CD4-positive, alpha-beta T cell (primary cell): ENCODE measurements at regions of chr7 and their contacts with region 1.

Region 1: DNA sequence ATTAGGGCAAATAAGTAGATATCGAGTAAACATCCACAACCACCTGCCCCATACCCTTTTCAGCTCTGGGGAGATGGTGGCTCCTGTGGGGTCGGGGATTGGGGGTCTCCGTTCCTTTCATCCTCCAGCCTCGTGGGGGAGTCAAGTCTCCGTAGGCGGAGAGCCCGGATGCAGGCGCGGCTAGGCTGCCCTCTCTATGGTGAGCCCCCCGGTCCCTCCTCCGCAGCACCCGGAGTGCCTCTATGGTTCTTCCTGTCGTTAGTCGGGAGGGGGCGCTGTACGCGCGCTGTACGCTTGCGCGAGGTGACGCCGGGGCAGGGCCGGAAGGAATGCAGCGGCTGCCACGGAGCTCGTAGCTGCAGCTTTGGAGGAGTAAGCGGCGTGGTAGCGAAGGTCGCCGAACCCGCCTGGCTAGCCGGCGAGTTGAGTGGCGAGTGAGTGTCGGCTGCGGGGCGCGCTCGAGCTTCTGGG is 14.8 kb upstream of the MMD2 start:
- DNase-seq: peak; percentile 88 to 96 (median 93)
- ATAC-seq: peak; percentile 98
- H3K4me3 ChIP-seq: peak overlapping the region; percentile 65
- H3K4me3 Mint-ChIP-seq: peak overlapping the region; percentile 99
- H3K27ac ChIP-seq: peak overlapping the region; percentile 36 to 61
- H3K27ac Mint-ChIP-seq: peak overlapping the region; percentile 87
- H3K4me1 ChIP-seq: peaks cover 17% of the 10 kb centered on the region
- H3K4me1 Mint-ChIP-seq: peaks cover 31% of the 10 kb centered on the region
- H3K27me3 ChIP-seq: no peaks in the 10 kb centered on the region
- H3K27me3 Mint-ChIP-seq: no peaks in the 10 kb centered on the region
- CTCF ChIP-seq: peak; percentile 75

Region 2: DNA sequence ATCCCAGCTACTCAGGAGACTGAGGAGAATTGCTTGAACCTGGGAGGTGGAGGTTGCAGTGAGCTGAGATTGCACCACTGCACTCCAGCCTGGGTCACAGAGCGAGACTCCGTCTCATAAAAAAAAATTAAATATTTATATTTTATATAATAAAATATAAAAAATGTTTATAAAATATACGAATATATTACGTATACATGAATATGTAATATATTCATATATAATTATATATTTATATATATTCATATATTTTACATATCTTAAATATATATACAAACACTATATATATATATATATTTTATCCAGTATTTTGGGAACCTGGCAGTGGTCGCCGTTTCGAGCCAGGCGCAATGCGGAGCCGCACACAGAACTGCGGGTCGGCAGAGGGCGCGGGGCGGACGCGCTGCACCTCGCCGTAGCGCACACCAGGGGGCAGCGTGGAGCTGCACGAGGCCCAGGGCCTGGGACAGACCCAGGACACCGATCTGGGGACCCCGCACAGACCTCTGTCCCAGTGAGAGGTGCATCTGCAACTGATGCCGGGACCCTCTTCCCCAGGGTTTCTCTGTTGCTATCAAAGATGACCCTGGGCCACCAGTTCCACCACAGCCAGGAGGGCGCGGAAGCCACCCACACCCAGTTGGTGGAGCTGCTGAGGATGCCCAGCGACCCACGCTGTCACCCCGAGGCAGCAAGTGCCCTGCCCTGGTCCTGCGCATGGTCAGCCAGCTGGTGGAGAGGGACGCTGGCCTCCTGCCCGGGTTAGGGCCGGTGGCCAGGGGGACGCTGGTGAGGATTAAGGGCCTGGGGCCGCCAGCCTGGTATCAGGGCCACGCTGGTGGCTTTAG is 175.7 kb before region 1 on chr7:
- CTCF ChIA-PET with region 1: no interaction called
- POLR2A ChIA-PET with region 1: interaction called, 6 read pairs
- intact Hi-C with region 1: loop called in 1 of 2 experiments (anchors 2 kb)
- DNase-seq: peak in 13 of 14 experiments; percentile 45 to 83 (median 56)
- ATAC-seq: peak; percentile 96
- H3K4me3 ChIP-seq: no peak overlapping the region
- H3K4me3 Mint-ChIP-seq: no peak overlapping the region
- H3K27ac ChIP-seq: no peak overlapping the region
- H3K27ac Mint-ChIP-seq: no peak overlapping the region
- H3K4me1 ChIP-seq: peaks cover 4% of the 10 kb centered on the region
- H3K4me1 Mint-ChIP-seq: no peaks in the 10 kb centered on the region
- H3K27me3 ChIP-seq: no peaks in the 10 kb centered on the region
- H3K27me3 Mint-ChIP-seq: no peaks in the 10 kb centered on the region
- CTCF ChIP-seq: peak; percentile 94

Region 3: DNA sequence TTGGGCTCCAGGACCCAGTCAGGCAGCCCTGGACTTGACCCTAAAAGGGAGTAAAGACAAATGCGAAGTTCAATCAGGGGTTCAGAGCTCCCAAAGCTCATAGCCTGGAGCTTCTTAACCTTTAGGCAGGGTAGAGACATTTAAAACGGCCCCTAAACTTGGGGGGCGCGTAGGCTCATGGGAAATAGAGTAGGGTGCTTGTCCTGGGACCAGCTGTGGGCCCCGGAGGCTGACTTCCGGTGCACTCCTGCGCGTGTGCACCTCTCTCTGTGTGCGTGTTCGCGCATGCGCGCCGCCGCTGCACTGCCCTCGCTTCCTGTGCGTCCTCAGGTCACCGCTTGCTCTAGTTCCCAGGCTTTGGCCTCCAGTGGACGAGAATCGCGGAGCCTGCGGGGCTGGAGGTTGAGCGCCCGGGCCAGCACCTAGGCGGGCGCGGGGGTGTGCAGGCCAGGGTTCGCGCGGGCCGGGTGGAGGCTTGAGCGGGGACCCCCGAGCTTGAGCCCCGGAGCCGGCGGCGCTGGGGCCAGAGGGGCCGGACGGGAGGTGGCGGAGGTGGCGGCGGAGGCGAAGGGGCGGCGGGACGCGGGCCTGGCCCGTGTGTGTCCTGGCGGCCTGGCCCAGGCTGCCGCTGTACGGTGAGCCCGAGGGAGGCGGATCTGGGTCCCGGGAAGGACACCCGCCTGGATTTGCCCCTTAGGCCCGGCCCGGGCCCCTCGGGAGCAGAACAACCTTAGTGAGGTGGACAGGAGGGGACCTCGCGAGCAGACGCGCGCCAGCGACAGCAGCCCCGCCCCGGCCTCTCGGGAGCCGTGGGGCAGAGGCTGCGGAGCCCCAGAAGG is 72.0 kb after region 1 on chr7 and contains the start of gene RBAK:
- CTCF ChIA-PET with region 1: interaction called, 5 read pairs
- POLR2A ChIA-PET with region 1: interaction called, 12 read pairs
- intact Hi-C with region 1: loop called in 1 of 2 experiments (anchors 10 kb)
- DNase-seq: peak; percentile 74 to 96 (median 87)
- ATAC-seq: peak; percentile 99
- H3K4me3 ChIP-seq: peak within 1 kb of the TSS; percentile 80
- H3K4me3 Mint-ChIP-seq: peak within 1 kb of the TSS; percentile 95
- H3K27ac ChIP-seq: peak within 1 kb of the TSS; percentile 9 to 68
- H3K27ac Mint-ChIP-seq: peak within 1 kb of the TSS; percentile 82
- H3K4me1 ChIP-seq: peaks cover 26% of the 10 kb centered on the region
- H3K4me1 Mint-ChIP-seq: peaks cover 44% of the 10 kb centered on the region
- H3K27me3 ChIP-seq: no peaks in the 10 kb centered on the region
- H3K27me3 Mint-ChIP-seq: no peaks in the 10 kb centered on the region
- CTCF ChIP-seq: no peak
- total RNA-seq, gene RBAK: 11.0 to 12.4 TPM

Region 4: DNA sequence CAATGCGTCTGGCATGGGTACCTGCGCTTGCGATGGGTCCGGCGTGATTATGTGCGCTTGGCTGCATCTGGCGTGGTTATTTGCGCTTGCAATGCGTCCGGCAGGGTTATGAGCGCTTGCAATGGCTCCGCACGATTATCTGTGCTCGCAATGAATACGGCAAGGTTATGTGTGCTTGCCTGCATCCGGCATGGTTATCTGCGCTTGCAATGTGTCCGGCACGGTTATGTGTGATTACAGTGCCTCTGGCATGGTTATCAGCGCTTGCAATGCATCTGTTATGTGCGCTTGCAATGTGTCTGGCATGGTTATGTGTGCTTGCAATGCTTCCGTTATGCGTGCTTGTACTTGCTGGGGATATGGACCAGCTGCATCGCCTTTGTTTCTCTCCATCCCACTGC is 109.5 kb after region 1 on chr7:
- CTCF ChIA-PET with region 1: interaction called, 4 read pairs
- POLR2A ChIA-PET with region 1: interaction called, 7 read pairs
- intact Hi-C with region 1: loop called (anchors 1 kb)
- DNase-seq: no peak
- ATAC-seq: no peak
- H3K4me3 ChIP-seq: no peak overlapping the region
- H3K4me3 Mint-ChIP-seq: no peak overlapping the region
- H3K27ac ChIP-seq: no peak overlapping the region
- H3K27ac Mint-ChIP-seq: no peak overlapping the region
- H3K4me1 ChIP-seq: peaks cover 6% of the 10 kb centered on the region
- H3K4me1 Mint-ChIP-seq: no peaks in the 10 kb centered on the region
- H3K27me3 ChIP-seq: peaks cover 0 to 7% of the 10 kb centered on the region in 2 experiments
- H3K27me3 Mint-ChIP-seq: no peaks in the 10 kb centered on the region
- CTCF ChIP-seq: no peak

Region 5: DNA sequence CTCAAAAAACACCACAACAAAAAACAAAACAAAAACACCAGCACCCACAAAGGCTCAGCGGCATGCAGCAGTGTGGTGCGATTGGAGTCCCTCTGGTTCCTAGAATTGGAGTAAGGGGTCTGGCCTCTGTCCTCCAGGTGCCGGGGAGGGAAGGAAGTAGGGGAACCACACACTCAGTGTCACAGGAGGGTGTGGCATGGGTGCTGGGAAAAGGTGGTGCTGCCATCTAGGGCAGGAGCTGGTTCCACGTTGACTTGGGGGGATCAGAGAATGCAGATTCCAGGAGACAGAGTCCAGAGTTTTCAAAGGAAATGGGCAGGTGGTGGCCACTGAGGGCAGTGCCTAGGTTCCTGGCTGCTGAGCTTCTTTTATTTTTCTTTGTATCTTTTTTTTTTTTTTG is 196.5 kb after region 1 on chr7:
- CTCF ChIA-PET with region 1: no interaction called
- POLR2A ChIA-PET with region 1: interaction called, 8 read pairs
- intact Hi-C with region 1: loop called (anchors 1 to 5 kb)
- DNase-seq: peak in 2 of 14 experiments; percentile 15
- ATAC-seq: peak; percentile 60
- H3K4me3 ChIP-seq: no peak overlapping the region
- H3K4me3 Mint-ChIP-seq: no peak overlapping the region
- H3K27ac ChIP-seq: no peak overlapping the region
- H3K27ac Mint-ChIP-seq: peak overlapping the region; percentile 55
- H3K4me1 ChIP-seq: peaks cover 18% of the 10 kb centered on the region
- H3K4me1 Mint-ChIP-seq: peaks cover 4% of the 10 kb centered on the region
- H3K27me3 ChIP-seq: no peaks in the 10 kb centered on the region
- H3K27me3 Mint-ChIP-seq: no peaks in the 10 kb centered on the region
- CTCF ChIP-seq: peak; percentile 55

Region 6: GRCh38 chr7:5177060-5177459 is 203.3 kb after region 1 on chr7:
- CTCF ChIA-PET with region 1: no interaction called
- POLR2A ChIA-PET with region 1: interaction called, 3 read pairs
- intact Hi-C with region 1: loop called in 1 of 2 experiments (anchors 5 kb)
- DNase-seq: no peak
- ATAC-seq: no peak
- H3K4me3 ChIP-seq: no peak overlapping the region
- H3K4me3 Mint-ChIP-seq: no peak overlapping the region
- H3K27ac ChIP-seq: no peak overlapping the region
- H3K27ac Mint-ChIP-seq: no peak overlapping the region
- H3K4me1 ChIP-seq: peaks cover 6% of the 10 kb centered on the region
- H3K4me1 Mint-ChIP-seq: no peaks in the 10 kb centered on the region
- H3K27me3 ChIP-seq: no peaks in the 10 kb centered on the region
- H3K27me3 Mint-ChIP-seq: no peaks in the 10 kb centered on the region
- CTCF ChIP-seq: no peak